Posterior vena cava (tissue), 2 donors: ENCODE measurements at regions of chr10 and their contacts with region 1.

Region 1: DNA sequence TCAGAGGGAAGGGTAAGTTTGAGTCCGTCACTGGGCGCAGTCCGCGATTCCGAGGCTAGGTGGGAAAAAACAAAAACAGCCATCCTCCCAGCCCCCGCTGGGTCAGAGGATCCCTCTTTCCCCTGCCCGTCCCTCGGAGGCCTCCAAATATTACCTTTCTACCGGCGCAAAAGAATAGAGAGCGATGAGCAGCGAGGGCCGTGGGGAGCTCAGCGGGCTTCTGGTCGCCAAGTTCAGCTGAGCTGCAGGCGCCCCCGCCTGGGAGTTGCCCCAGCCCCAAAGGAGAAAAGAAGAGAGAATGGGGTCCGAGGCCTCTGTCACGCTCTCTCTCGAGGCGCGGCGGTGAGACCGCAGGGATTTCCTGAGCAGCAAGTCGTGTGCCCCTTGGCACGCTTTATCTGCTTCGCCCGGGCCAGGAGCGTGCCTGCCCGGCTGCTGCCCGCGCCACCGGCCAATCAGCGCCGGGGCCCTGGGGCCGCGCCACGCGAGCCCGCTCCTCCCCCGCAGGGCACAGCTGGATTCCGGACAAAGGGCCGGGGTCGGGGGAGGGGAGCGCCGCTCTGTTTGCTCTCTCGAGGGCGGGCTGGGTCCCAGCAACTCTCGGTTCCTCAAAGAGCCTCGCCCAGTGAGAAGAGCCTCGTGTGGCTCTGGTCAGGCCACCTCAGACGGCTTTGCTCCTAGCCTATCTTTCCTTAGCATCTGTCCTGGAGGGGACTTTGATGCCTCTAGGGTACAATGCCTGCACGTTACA is at the start of gene NEUROG3:
- DNase-seq: no peak
- total RNA-seq, gene NEUROG3: not detected

Region 2: DNA sequence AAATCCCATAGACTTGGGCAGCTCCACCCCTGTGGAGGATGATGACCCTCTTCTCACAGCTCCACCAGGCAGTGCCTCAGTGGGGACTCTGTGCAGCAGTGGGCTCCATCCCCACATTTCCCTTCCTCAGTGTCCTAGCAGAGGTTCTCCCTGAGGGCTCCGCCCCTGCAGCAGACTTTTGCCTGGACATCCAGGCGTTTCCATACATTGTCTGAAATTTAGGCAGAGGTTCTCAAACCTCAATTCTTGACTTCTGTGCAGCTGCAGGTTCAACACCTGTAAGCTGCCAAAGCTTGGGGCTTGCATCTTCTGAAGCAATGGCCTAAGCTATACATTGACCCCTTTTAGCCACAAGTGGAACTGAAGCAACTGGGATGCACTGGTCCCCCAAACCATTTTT is 31.8 kb before region 1 on chr10:
- intact Hi-C with region 1: loop called in 1 of 2 experiments (anchors 2 kb)
- DNase-seq: no peak

Region 3: GRCh38 chr10:70589762-70590654 is 1016.8 kb after region 1 on chr10:
- intact Hi-C with region 1: loop called in 1 of 2 experiments (anchors 10 kb)
- DNase-seq: no peak

Region 4: GRCh38 chr10:70956029-70956759 is 1383.0 kb after region 1 on chr10:
- intact Hi-C with region 1: no loop called
- DNase-seq: peak; percentile 61